Activated T-helper 1 cell treated with anti-CD3 and anti-CD28 coated beads, Interleukin-12 subunit alpha, Interleukin-12 subunit beta, Interleukin-2, Interleukin-4 antibody, amounts not matched to agents 30 ng/mL and 10 ng/mL and 1 ng/mL, durations not matched to agents 14 hours and 24 hours and 36 hours (primary cell): ENCODE measurements at regions of chr14 and their contacts with region 1.

Region 1: GRCh38 chr14:100192672-100193416 is 33.4 kb upstream of the DEGS2 start:
- DNase-seq: peak; percentile 100
- H3K4me3 Mint-ChIP-seq: peak overlapping the region; percentile 60
- H3K27ac Mint-ChIP-seq: peak overlapping the region; percentile 67
- H3K4me1 Mint-ChIP-seq: peaks cover 6% of the 10 kb centered on the region
- H3K27me3 Mint-ChIP-seq: no peaks in the 10 kb centered on the region

Region 2: DNA sequence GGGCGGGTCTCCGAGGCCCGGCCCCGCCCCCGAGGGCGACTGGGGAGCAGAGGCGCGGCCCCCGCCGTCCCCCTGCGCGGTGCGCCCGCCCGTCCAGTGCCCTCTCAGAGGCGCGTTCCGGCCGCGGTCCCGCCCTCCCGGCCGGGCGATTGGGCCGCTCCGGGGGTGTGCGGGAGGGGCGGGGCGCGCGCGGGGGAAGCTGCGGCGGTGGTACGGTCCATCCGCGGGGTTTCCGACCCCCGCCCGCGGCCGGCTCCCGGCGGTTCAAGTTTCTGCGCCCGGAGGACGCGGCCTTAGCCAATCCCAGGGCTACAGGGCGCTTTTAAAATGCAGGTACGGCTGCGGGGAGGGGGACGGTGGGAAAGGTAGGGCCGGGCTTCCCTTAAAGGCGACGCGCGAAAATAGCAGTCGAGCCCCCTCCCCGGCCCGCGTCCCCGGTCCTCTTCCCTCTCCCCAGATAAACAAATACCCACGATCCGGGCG is 588.5 kb before region 1 on chr14:
- intact Hi-C with region 1: loop called (anchors 10 kb)
- DNase-seq: peak; percentile 96
- H3K4me3 Mint-ChIP-seq: peak overlapping the region; percentile 88
- H3K27ac Mint-ChIP-seq: peak overlapping the region; percentile 88
- H3K4me1 Mint-ChIP-seq: peaks cover 24% of the 10 kb centered on the region
- H3K27me3 Mint-ChIP-seq: peaks cover 12% of the 10 kb centered on the region

Region 3: DNA sequence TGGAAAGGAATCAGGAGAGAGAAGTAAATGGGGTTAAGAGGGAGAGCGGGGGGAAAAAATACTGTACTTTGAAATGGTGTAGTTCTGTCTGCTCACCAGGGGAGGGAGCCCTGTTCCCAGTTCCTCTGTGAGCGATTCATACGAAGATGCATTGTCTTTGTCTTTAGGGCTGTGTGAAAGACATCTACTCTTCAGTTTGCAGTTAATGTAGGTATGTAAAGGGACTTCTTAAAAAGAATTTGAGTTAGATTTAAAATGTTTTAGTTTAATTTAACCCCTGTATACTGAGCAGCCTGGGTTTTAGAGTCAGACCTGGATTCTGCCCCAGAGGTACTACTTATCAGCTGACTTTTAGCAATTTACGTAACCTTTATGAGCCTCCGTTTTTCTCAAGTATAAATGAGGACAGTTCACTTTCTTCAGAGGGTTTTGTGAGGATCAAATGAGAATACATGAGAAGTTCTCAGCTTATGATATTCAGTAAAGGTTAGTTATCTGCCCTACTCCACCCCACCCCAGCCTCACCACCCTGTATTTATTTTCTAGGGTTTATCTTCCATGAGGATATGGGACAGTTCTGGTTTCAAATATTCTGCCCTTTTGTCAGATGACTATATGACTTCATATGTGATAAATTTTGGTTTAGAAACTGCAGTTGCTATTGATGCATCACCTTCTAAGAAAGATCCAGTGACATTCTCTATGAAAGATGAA is 210.2 kb before region 1 on chr14:
- intact Hi-C with region 1: loop called (anchors 1 kb)
- DNase-seq: peak; percentile 36
- H3K4me3 Mint-ChIP-seq: no peak overlapping the region
- H3K27ac Mint-ChIP-seq: no peak overlapping the region
- H3K4me1 Mint-ChIP-seq: peaks cover 25% of the 10 kb centered on the region
- H3K27me3 Mint-ChIP-seq: no peaks in the 10 kb centered on the region

Region 4: GRCh38 chr14:100031536-100032281 is 161.1 kb before region 1 on chr14:
- intact Hi-C with region 1: no loop called
- DNase-seq: no peak
- H3K4me3 Mint-ChIP-seq: no peak overlapping the region
- H3K27ac Mint-ChIP-seq: no peak overlapping the region
- H3K4me1 Mint-ChIP-seq: no peaks in the 10 kb centered on the region
- H3K27me3 Mint-ChIP-seq: peaks cover 1% of the 10 kb centered on the region

Region 5: GRCh38 chr14:100108042-100108825 is 84.6 kb before region 1 on chr14:
- intact Hi-C with region 1: loop called (anchors 1 kb)
- DNase-seq: peak; percentile 74
- H3K4me3 Mint-ChIP-seq: peak overlapping the region; percentile 47
- H3K27ac Mint-ChIP-seq: peak overlapping the region; percentile 93
- H3K4me1 Mint-ChIP-seq: peaks cover 76% of the 10 kb centered on the region
- H3K27me3 Mint-ChIP-seq: no peaks in the 10 kb centered on the region

Region 6: DNA sequence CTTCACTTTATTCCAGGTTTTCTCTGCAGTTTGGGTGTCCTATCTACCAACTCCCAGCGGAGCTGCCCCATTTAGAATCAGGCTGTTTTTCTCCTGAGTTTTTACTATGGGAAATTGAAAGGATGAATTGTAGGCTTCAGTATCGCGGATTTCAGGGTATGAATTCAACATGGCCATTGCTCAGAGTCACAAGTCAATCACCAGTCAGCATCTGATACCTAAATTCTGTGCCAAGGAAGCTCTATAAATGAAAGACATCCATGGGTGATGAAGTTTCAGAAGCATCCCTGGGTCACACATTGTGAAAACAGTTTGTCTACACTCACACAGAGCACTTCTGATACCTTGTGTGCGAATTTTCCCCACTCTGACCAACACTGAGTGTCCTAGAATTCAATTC is 10.3 kb after region 1 on chr14:
- intact Hi-C with region 1: no loop called
- DNase-seq: no peak
- H3K4me3 Mint-ChIP-seq: no peak overlapping the region
- H3K27ac Mint-ChIP-seq: no peak overlapping the region
- H3K4me1 Mint-ChIP-seq: no peaks in the 10 kb centered on the region
- H3K27me3 Mint-ChIP-seq: peaks cover 4% of the 10 kb centered on the region

Region 7: DNA sequence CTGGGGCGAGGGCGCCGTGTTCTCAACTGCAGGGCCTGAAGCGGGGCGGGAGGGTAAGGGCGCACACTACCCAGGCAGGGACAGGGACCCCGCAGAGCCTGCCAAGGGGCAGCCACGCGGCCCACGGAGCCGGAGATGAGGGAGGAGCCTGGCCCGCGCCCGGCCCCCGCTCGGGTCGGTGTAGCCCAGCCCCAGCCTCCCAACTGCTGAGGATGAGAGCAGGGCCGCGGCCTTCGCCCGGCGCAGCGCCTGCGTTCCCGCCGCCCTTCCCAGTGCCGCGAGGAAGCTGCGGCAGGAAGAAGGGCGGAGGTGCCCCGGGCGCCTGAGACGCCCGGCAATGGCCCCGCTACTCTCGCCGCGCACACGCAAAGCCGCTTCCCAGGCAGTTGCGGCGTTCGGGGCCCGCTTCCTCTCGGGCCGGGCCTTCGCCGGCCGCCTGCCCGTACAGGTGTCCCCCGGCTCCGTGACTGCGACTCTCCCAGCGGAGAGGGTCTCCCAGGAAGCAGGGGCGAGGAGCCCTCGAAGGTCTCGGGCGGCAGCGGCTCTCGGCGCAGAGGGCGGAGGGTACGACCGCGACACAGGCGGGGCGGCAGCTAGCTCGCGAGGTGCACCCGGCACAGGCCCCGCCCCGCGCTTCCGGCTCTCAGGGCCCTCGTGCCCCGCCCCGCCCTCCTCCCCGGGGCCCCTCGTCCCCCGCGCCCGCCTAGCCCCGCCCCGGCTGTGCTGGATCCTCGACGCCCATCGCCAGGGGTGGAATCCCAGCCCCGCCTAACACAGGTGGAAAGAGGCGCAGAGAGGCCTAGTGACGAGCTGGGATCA is 21.3 kb after region 1 on chr14:
- intact Hi-C with region 1: loop called (anchors 1 kb)
- DNase-seq: peak; percentile 88
- H3K4me3 Mint-ChIP-seq: peak overlapping the region; percentile 85
- H3K27ac Mint-ChIP-seq: peak overlapping the region; percentile 87
- H3K4me1 Mint-ChIP-seq: peaks cover 25% of the 10 kb centered on the region
- H3K27me3 Mint-ChIP-seq: peaks cover 2% of the 10 kb centered on the region

Region 8: DNA sequence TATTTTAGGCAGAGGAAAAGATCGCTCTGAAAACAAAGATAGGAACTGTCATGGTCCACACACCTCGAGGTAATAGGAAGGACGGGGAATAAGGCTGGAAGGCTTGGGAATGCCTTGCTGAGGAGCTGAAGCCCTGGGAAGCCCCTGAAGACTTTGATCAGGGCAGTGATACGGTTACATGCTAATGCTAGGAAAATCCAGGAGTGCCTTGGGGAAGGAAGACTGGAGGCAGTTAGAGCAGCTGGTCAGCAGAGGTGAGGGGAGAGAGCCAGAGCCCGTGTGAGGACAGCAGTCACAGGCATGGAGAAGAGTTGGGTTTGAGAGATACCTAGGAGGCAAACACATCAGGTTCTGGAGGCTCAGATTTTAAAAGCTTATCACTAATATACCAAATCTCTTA is 37.5 kb after region 1 on chr14:
- intact Hi-C with region 1: no loop called
- DNase-seq: no peak
- H3K4me3 Mint-ChIP-seq: no peak overlapping the region
- H3K27ac Mint-ChIP-seq: no peak overlapping the region
- H3K4me1 Mint-ChIP-seq: peaks cover 17% of the 10 kb centered on the region
- H3K27me3 Mint-ChIP-seq: no peaks in the 10 kb centered on the region

Region 9: GRCh38 chr14:100446572-100446971 is 253.7 kb after region 1 on chr14:
- intact Hi-C with region 1: no loop called
- DNase-seq: no peak
- H3K4me3 Mint-ChIP-seq: no peak overlapping the region
- H3K27ac Mint-ChIP-seq: no peak overlapping the region
- H3K4me1 Mint-ChIP-seq: peaks cover 7% of the 10 kb centered on the region
- H3K27me3 Mint-ChIP-seq: no peaks in the 10 kb centered on the region